ENCODE measurements at regions of chr5 and their contacts with region 1.

Region 1: GRCh38 chr5:138503487-138504270 is 38.4 kb downstream of the EGR1 start:
- DNase-seq: no peak
- H3K4me3 ChIP-seq: no peak overlapping the region
- H3K27ac ChIP-seq: peak overlapping the region; percentile 10
- H3K4me1 ChIP-seq: peaks cover 41% of the 10 kb centered on the region
- H3K27me3 ChIP-seq: no peaks in the 10 kb centered on the region
- CTCF ChIP-seq: peak; percentile 54 to 85 (median 74)
- POLR2A ChIP-seq: no peak

Region 2: DNA sequence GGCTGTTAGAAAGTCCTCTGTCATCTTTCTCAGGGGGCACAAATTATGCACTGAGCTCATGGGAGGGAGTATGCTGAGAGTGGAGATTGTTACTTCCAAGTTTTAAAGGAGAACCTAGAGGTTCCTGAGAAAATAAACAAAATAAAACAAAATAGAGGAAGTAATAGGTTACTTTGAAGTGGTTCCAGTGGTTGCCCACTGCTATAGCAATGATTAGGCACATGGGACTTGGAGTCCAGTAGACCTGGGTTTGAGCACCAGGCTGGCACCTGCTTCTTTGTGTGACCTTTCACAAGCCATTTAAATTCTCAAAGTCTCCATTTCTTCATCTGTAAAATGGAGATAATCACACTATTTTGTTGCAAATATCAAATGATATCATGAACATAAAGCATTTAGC is 276.8 kb before region 1 on chr5:
- intact Hi-C with region 1: no loop called
- DNase-seq: no peak
- H3K4me3 ChIP-seq: no peak overlapping the region
- H3K27ac ChIP-seq: no peak overlapping the region
- H3K4me1 ChIP-seq: no peaks in the 10 kb centered on the region
- H3K27me3 ChIP-seq: no peaks in the 10 kb centered on the region
- CTCF ChIP-seq: no peak
- POLR2A ChIP-seq: no peak

Region 3: DNA sequence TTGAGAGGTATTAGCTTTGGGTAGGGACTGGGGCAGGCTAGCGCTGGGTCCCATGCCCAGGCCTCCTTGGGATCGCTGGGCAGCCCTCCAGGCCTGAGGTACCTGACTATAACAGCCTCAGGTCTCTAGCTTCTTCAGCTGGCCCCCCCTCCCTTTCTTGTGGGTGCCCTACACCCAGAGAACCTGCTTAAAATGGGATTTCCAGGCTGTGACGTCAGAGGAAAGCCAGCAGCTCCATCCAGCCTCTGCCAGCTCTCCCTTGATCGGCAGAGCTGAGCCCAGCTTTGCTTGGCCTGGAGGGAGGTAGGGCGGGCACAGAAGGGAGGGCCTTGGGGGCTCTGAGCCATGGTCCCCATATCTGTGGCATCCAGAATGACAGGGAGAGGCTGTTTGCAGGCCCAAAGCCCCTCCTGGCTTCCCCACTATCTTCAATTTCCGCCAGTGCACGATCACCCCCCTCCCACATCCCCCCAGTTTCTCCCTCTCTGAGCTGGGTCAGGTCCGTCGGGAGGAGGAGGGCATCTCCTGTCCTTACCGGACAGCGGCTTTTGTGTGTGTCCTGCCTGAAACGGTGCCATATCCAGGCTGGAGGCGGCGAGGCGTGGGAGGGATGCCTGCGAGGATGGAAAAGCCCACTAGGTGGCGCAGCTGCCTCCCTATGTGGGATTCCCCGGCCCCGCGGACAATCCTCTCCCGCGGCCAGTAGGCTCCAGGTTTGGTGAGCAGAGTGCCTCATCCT is 54.0 kb before region 1 on chr5:
- intact Hi-C with region 1: loop called (anchors 5 kb)
- DNase-seq: peak; percentile 90 to 92
- H3K4me3 ChIP-seq: peak overlapping the region in 1 of 2 donors; percentile 13
- H3K27ac ChIP-seq: no peak overlapping the region
- H3K4me1 ChIP-seq: peaks cover 5% of the 10 kb centered on the region
- H3K27me3 ChIP-seq: no peaks in the 10 kb centered on the region
- CTCF ChIP-seq: peak; percentile 85 to 96 (median 86)
- POLR2A ChIP-seq: no peak

Measured in vagina (tissue), 2 donors.